T-cell (primary cell): ENCODE measurements at regions of chr14 and their contacts with region 1.

Region 1: DNA sequence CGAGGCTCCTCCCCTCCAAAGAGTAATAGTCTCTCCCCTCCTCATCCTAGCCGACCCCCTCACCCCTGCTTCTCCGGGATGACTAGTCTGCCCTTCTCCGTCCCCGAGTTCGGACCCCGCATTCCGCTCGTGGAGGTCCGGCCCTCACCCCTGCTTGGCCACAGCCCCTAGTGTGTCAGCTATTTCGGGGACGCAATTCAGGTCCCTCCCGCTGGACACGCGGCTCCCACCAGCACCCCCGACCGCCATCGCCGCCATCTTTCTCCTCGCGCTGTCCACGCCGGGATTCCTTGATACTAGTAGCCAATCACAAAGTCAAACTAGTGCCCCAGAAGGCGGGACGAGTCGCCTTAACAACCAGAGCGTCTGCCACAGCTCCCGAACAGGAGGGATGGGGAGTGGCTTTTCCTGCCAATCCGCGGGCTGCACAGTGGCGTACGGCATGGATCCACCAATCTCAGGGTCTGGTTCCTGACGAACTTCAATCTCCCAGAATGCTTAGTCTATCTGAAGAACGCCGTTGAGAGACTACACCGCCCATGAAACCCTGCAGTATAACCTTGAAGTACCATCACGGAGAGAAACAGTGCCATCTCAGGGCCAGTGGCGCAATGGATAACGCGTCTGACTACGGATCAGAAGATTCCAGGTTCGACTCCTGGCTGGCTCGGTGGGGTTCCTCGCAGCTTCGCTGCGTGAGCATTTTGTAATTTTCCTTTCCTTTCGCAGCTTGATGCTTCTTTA is at the start of gene PRMT5:
- DNase-seq: peak; percentile 93 to 100 (median 98)
- ATAC-seq: peak; percentile 95 to 97 (median 97)
- H3K4me3 ChIP-seq: peak within 1 kb of the TSS; percentile 97 to 99
- H3K4me3 Mint-ChIP-seq: no peak within 1 kb of the TSS
- H3K27ac ChIP-seq: peak within 1 kb of the TSS; percentile 89
- H3K27ac Mint-ChIP-seq: no peak within 1 kb of the TSS
- H3K4me1 ChIP-seq: peaks cover 9 to 20% of the 10 kb centered on the region in 2 experiments
- H3K4me1 Mint-ChIP-seq: peaks cover 5 to 19% (median 11%) of the 10 kb centered on the region in 3 donors
- H3K27me3 ChIP-seq: no peaks in the 10 kb centered on the region
- H3K27me3 Mint-ChIP-seq: no peaks in the 10 kb centered on the region
- total RNA-seq, gene PRMT5: 17.7 to 45.3 (median 37.5) TPM

Region 2: DNA sequence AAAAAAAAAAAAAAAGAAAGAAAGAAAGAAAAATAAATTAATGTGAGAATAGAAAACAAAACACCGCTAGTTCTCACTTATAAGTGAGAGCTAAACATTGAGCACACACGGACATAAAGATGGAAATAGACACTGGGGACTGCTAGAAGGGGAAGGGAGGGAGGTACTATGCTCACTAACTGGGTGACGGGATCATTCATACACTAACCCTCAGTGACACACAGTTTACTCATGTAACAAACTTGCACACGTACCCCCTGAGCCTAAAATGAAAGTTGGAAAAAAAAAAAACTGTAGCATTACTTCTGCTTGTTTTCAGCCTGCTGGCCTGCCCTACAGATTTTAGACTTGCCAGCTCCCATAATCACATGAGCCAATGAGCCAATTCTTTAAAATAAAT is 10.4 kb after region 1 on chr14:
- CTCF ChIA-PET with region 1: interaction called, 4 to 8 read pairs
- POLR2A ChIA-PET with region 1: interaction called, 5 to 13 read pairs
- DNase-seq: no peak
- ATAC-seq: no peak
- H3K4me3 ChIP-seq: no peak overlapping the region
- H3K4me3 Mint-ChIP-seq: no peak overlapping the region
- H3K27ac ChIP-seq: no peak overlapping the region
- H3K27ac Mint-ChIP-seq: no peak overlapping the region
- H3K4me1 ChIP-seq: no peaks in the 10 kb centered on the region
- H3K4me1 Mint-ChIP-seq: no peaks in the 10 kb centered on the region
- H3K27me3 ChIP-seq: no peaks in the 10 kb centered on the region
- H3K27me3 Mint-ChIP-seq: no peaks in the 10 kb centered on the region

Region 3: GRCh38 chr14:22955702-22956569 is 26.7 kb after region 1 on chr14:
- CTCF ChIA-PET with region 1: interaction called in 1 of 2 experiments, 11 read pairs
- POLR2A ChIA-PET with region 1: no interaction called
- DNase-seq: no peak
- ATAC-seq: no peak
- H3K4me3 ChIP-seq: peak overlapping the region; percentile 81 to 86
- H3K4me3 Mint-ChIP-seq: peak overlapping the region; percentile 88 to 91 (median 91)
- H3K27ac ChIP-seq: peak overlapping the region; percentile 83
- H3K27ac Mint-ChIP-seq: peak overlapping the region; percentile 91 to 93
- H3K4me1 ChIP-seq: peaks cover 0 to 19% of the 10 kb centered on the region in 2 experiments
- H3K4me1 Mint-ChIP-seq: peaks cover 7 to 18% (median 15%) of the 10 kb centered on the region in 3 donors
- H3K27me3 ChIP-seq: no peaks in the 10 kb centered on the region
- H3K27me3 Mint-ChIP-seq: no peaks in the 10 kb centered on the region